Stomach (tissue), 19 donors: ENCODE measurements at regions of chr12 and their contacts with region 1.

Region 1: DNA sequence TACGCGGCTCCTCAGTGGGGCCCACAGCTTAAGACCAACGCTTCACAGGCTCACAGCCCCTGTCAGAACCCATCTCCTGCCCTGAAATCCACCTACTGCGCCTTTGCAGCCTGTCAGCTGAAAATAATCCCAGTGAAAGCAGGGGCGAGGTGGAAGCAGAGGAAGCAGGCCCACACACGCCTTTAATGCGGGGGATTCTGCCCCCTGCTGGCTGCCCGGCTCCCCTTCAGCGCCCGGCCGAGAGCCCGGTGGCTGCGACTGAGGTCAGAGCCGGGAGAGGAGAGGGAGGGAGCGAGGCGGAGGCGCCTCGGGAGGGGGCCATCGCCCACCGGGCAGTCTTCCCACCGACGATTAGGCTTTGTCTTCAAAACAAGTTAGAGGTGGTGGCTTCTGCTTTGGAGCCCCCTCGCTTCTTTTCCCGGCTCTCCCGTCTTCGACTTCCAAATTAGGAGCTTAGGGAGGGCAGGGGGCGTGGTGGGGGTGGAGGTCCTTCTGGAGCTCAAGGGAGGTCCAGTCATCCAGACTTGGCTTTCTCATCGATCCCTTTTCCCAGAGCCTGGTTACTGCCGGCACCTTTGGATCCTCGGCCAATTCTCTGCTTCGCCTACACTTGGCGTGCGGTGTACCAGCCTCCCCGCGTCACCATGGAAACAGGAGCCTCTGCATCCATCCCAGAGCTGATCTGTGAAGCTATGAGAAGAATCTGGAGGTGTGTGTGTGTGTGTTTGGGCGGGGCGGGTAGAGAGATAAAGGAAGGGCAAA is 25.2 kb upstream of the RND1 start:
- DNase-seq: peak; percentile 89 to 94
- H3K4me3 ChIP-seq: peak overlapping the region; percentile 23 to 31 (median 30)
- H3K27ac ChIP-seq: peak overlapping the region in 1 of 5 donors; percentile 15
- H3K4me1 ChIP-seq: peaks cover 8 to 18% (median 11%) of the 10 kb centered on the region in 4 donors
- H3K27me3 ChIP-seq: peaks cover 0 to 27% (median 7%) of the 10 kb centered on the region in 3 donors
- CTCF ChIP-seq: peak in 6 of 7 experiments; percentile 33 to 97 (median 90)
- EP300 ChIP-seq: no peak
- POLR2A ChIP-seq: no peak

Region 2: GRCh38 chr12:48857278-48857994 is 33.4 kb before region 1 on chr12:
- intact Hi-C with region 1: loop called (anchors 5 kb)
- DNase-seq: no peak
- H3K4me3 ChIP-seq: no peak overlapping the region
- H3K27ac ChIP-seq: no peak overlapping the region
- H3K4me1 ChIP-seq: peaks cover 6 to 15% (median 9%) of the 10 kb centered on the region in 4 donors
- H3K27me3 ChIP-seq: peaks cover 0 to 2% (median 0%) of the 10 kb centered on the region in 3 donors
- CTCF ChIP-seq: no peak
- EP300 ChIP-seq: no peak
- POLR2A ChIP-seq: no peak

Region 3: GRCh38 chr12:48977315-48978281 is 86.8 kb after region 1 on chr12:
- intact Hi-C with region 1: no loop called
- DNase-seq: peak; percentile 67 to 85
- H3K4me3 ChIP-seq: peak overlapping the region; percentile 26 to 53 (median 40)
- H3K27ac ChIP-seq: no peak overlapping the region
- H3K4me1 ChIP-seq: peaks cover 39 to 54% (median 47%) of the 10 kb centered on the region in 4 donors
- H3K27me3 ChIP-seq: peaks cover 32 to 100% (median 88%) of the 10 kb centered on the region in 3 donors
- CTCF ChIP-seq: peak in 5 of 7 experiments; percentile 38 to 85 (median 59)
- EP300 ChIP-seq: no peak
- POLR2A ChIP-seq: no peak